Activated B cell treated with CpG ODN at 0.5 μM for 24 hours (primary cell): ENCODE measurements at regions of chr4 and their contacts with region 1.

Region 1: DNA sequence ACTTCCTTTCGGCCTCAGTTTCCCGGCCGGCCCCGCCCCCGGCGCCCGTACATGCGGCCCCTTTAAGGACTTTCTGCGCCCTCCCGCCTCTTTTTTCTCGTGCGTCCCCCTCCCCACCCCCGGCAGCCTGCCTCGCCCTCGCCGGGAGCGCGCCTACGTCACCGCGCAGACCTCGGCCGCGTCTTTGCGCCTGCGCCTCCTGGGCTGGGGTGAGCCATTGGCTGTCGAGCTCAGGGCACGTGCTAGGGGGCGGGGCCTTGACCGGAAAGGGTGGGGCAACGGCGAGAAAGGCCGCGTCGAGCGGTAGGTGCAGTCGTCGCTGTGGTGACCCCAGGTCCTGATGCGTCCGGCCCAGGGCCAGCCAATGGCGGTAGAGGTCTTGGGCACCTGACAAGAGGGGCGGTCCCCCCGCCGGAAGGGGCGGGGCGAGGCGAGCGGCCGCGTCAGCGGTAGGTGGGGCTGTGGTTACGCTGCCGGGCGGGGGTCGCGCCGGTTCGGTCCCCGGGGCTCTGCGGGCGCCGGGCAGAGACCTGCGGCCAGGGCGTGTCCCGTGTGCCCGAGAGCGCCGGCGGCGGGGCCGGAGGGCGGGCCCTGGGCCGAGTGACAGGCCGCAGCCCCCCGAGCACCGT is at the start of gene UVSSA:
- DNase-seq: peak; percentile 100
- ATAC-seq: peak; percentile 91
- H3K4me3 Mint-ChIP-seq: peak within 1 kb of the TSS; percentile 90
- H3K27ac Mint-ChIP-seq: peak within 1 kb of the TSS; percentile 84
- H3K4me1 Mint-ChIP-seq: peaks cover 33% of the 10 kb centered on the region
- H3K27me3 Mint-ChIP-seq: no peaks in the 10 kb centered on the region
- CTCF ChIP-seq: no peak
- total RNA-seq, gene UVSSA: 31.7 and 35.2 TPM in 2 replicates

Region 2: GRCh38 chr4:931960-932712 is 414.8 kb before region 1 on chr4 and contains the starts of genes GAK and TMEM175:
- CTCF ChIA-PET with region 1: no interaction called
- POLR2A ChIA-PET with region 1: interaction called, 9 read pairs
- intact Hi-C with region 1: loop called (anchors 5 kb)
- DNase-seq: peak; percentile 99
- ATAC-seq: peak; percentile 90
- H3K4me3 Mint-ChIP-seq: peak within 1 kb of the TSS; percentile 93
- H3K27ac Mint-ChIP-seq: peak within 1 kb of the TSS; percentile 92
- H3K4me1 Mint-ChIP-seq: peaks cover 78% of the 10 kb centered on the region
- H3K27me3 Mint-ChIP-seq: no peaks in the 10 kb centered on the region
- CTCF ChIP-seq: no peak
- total RNA-seq, gene GAK: 159 and 172 TPM in 2 replicates
- total RNA-seq, gene TMEM175: 24.5 and 28.8 TPM in 2 replicates

Region 3: DNA sequence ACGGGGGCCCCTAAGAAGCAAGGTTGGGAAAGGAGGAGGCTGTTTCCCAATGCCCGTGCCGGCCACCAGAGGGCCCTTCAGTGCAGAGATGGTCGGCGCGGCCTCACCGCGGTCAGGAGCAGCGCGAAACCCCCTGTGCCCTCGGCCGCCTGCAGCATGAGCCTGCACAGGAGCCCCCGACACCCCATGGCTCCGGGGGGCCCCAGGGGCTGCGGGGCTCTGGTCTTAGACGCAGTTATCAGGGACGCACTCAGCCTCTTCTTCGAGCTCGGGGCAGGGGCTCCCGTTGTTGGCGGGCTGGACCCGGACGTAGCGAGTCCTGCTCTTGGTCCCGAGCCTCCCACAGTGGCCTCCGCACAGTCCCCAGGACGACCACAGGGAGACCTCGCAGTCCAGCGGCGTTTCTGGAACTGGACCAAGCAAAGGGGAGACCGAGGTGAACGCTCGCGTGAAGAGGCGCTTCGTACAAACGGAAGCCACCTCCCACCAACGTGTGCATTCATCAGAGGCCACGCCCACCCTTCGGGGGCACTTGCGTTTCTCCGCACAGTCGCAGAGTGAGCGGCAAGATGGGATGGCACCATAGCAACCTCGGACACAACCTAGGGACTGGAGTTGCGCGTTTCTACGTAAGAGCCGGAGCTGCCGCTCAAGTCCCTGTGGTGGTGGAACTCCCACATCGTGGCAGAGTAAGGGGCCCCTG is 179.5 kb before region 1 on chr4:
- CTCF ChIA-PET with region 1: no interaction called
- POLR2A ChIA-PET with region 1: interaction called, 4 read pairs
- intact Hi-C with region 1: loop called (anchors 1 kb)
- DNase-seq: peak; percentile 79
- ATAC-seq: peak; percentile 88
- H3K4me3 Mint-ChIP-seq: peak overlapping the region; percentile 86
- H3K27ac Mint-ChIP-seq: peak overlapping the region; percentile 80
- H3K4me1 Mint-ChIP-seq: peaks cover 57% of the 10 kb centered on the region
- H3K27me3 Mint-ChIP-seq: peaks cover 2% of the 10 kb centered on the region
- CTCF ChIP-seq: peak; percentile 69

Region 4: DNA sequence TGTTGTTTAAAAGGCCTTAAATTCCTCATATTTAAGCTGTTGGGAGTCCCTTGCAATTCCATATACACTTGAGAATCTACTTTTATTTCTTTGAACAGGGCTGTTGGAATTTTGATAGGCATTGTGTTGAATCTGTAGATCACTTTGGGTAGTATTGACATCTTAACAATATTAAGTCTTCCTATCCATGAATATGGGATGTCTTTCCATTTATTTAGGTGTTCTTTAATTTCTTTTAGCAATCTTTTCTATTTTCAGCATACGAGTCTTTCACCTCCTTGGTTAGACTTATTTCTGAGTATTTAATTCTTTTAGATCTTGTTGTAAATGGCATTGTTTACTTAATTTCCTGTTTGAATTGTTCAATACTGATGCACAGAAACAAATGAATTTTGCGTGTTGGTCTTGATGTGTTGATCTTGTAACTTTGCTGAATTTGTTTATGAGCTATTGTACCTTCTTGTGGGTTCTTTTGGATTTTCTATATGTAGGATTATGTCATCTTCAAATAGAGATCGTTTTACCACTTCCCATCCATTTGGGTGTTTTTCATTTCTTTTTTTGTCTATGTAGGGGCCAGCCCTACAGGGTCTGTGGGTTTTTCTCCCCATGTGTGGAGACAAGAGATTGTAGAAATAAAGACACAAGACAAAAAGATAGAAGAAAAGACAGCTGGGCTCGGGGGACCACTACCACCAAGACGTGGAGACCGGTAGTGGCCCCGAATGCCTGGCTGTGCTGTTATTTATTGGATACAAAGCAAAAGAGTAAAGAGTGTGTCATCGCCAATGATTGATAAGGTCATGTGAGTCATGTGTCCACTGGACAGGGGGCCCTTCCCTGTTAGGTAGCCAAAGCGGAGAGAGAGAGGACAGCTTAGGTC is 79.8 kb before region 1 on chr4:
- CTCF ChIA-PET with region 1: interaction called, 16 read pairs
- POLR2A ChIA-PET with region 1: interaction called, 7 read pairs
- intact Hi-C with region 1: loop called (anchors 1 kb)
- DNase-seq: no peak
- ATAC-seq: peak; percentile 61
- H3K4me3 Mint-ChIP-seq: peak overlapping the region; percentile 84
- H3K27ac Mint-ChIP-seq: peak overlapping the region; percentile 89
- H3K4me1 Mint-ChIP-seq: peaks cover 31% of the 10 kb centered on the region
- H3K27me3 Mint-ChIP-seq: no peaks in the 10 kb centered on the region
- CTCF ChIP-seq: no peak

Region 5: DNA sequence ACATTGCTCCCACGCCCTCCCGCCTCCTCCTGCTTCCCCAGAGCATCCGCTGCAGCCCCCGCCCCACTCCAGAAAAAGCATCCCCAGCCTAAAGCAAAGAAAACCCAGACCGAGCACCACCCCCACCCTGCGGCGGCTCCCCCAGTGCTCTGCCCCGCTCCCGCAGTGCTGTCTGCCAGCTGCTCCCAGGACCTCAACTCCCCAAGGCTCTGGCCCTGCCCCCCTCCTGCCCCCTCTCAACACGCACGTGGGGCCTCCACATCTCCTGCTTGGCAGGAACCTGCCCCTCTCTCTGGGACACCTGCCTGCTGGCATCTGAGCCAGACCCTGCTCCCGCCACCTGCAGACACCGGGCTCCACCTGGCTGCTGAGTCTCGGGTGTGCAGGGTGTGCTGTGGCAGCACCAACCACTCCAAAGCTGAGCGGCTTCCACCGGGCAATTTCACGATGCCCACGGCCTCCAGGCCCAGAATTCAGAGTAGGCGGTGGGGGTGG is 257.9 kb after region 1 on chr4:
- CTCF ChIA-PET with region 1: no interaction called
- POLR2A ChIA-PET with region 1: no interaction called
- intact Hi-C with region 1: no loop called
- DNase-seq: no peak
- ATAC-seq: no peak
- H3K4me3 Mint-ChIP-seq: no peak overlapping the region
- H3K27ac Mint-ChIP-seq: no peak overlapping the region
- H3K4me1 Mint-ChIP-seq: no peaks in the 10 kb centered on the region
- H3K27me3 Mint-ChIP-seq: peaks cover 2% of the 10 kb centered on the region
- CTCF ChIP-seq: no peak

Region 6: DNA sequence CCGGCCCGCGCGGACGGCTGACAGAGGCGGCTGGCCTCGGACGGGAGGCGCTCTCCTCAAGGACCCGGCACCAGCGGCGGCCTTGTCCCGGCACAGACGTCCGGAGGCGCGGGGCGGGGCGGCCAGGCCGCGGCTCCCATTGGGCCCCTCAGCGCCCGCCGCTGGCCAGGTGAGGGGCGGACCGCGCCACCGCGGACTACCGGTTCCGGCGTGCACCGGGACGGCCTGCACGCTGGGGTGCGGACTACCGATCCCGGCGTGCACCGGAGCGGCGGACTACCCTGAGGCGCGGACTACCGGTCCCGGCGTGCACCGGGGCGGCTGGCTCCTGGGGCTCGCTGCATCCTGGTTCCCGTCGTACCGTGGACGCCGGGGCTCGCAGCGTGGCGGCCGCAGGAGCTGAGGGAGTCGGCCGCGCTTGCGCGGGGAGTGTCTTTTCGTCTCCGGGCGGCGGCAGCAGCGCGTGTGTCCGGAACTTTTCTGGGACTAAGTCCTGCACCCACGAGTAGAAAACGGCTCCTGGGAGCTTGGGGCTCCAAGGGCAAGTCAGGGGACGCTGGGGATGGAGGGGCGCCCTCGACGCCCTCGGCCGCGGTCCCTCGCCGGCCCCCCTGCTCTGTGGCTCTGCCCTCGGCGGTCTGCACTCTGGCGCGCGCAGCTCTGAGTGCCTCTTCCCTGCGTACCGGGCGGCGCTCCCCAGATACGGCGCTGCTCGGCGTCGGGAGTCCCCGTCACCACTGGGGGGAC is 509.3 kb after region 1 on chr4 and contains the start of gene LETM1:
- CTCF ChIA-PET with region 1: no interaction called
- POLR2A ChIA-PET with region 1: no interaction called
- intact Hi-C with region 1: loop called (anchors 2 kb)
- DNase-seq: peak; percentile 90
- ATAC-seq: peak; percentile 95
- H3K4me3 Mint-ChIP-seq: peak within 1 kb of the TSS; percentile 83
- H3K27ac Mint-ChIP-seq: peak within 1 kb of the TSS; percentile 75
- H3K4me1 Mint-ChIP-seq: peaks cover 23% of the 10 kb centered on the region
- H3K27me3 Mint-ChIP-seq: no peaks in the 10 kb centered on the region
- CTCF ChIP-seq: no peak
- total RNA-seq, gene LETM1: 52.5 and 60.3 TPM in 2 replicates